Mammary epithelial cell (primary cell): ENCODE measurements at regions of chr11 and their contacts with region 1.

Region 1: GRCh38 chr11:64269380-64270234 is 14.9 kb downstream of the BAD start:
- DNase-seq: peak; percentile 99
- H3K4me3 ChIP-seq: peak overlapping the region; percentile 57 to 70 (median 59)
- H3K27ac ChIP-seq: peak overlapping the region; percentile 62
- H3K4me1 ChIP-seq: peaks cover 41% of the 10 kb centered on the region
- H3K27me3 ChIP-seq: no peaks in the 10 kb centered on the region
- CTCF ChIP-seq: peak in 1 of 2 donors; percentile 24

Region 2: GRCh38 chr11:64246871-64247728 is 22.5 kb before region 1 on chr11 and contains the start of gene PPP1R14B:
- CTCF ChIA-PET with region 1: no interaction called
- dilution Hi-C with region 1: no loop called
- in situ Hi-C with region 1: no loop called
- intact Hi-C with region 1: loop called (anchors 1 kb)
- DNase-seq: peak; percentile 81
- H3K4me3 ChIP-seq: peak within 1 kb of the TSS; percentile 79 to 84 (median 82)
- H3K27ac ChIP-seq: peak within 1 kb of the TSS; percentile 77
- H3K4me1 ChIP-seq: peaks cover 41% of the 10 kb centered on the region
- H3K27me3 ChIP-seq: no peaks in the 10 kb centered on the region
- CTCF ChIP-seq: peak in 1 of 2 donors; percentile 15
- total RNA-seq, gene PPP1R14B: 118 to 362 TPM

Region 3: GRCh38 chr11:64284048-64284961 is 14.7 kb after region 1 on chr11 and contains the start of gene BAD:
- CTCF ChIA-PET with region 1: no interaction called
- dilution Hi-C with region 1: no loop called
- in situ Hi-C with region 1: no loop called
- intact Hi-C with region 1: loop called (anchors 1 kb)
- DNase-seq: peak; percentile 88
- H3K4me3 ChIP-seq: peak within 1 kb of the TSS; percentile 58 to 81 (median 78)
- H3K27ac ChIP-seq: peak within 1 kb of the TSS; percentile 91
- H3K4me1 ChIP-seq: peaks cover 15% of the 10 kb centered on the region
- H3K27me3 ChIP-seq: no peaks in the 10 kb centered on the region
- CTCF ChIP-seq: no peak
- total RNA-seq, gene BAD: 52.2 to 54.9 TPM